HEK293 (cell line): ENCODE measurements at regions of chr12 and their contacts with region 1.

Region 1: DNA sequence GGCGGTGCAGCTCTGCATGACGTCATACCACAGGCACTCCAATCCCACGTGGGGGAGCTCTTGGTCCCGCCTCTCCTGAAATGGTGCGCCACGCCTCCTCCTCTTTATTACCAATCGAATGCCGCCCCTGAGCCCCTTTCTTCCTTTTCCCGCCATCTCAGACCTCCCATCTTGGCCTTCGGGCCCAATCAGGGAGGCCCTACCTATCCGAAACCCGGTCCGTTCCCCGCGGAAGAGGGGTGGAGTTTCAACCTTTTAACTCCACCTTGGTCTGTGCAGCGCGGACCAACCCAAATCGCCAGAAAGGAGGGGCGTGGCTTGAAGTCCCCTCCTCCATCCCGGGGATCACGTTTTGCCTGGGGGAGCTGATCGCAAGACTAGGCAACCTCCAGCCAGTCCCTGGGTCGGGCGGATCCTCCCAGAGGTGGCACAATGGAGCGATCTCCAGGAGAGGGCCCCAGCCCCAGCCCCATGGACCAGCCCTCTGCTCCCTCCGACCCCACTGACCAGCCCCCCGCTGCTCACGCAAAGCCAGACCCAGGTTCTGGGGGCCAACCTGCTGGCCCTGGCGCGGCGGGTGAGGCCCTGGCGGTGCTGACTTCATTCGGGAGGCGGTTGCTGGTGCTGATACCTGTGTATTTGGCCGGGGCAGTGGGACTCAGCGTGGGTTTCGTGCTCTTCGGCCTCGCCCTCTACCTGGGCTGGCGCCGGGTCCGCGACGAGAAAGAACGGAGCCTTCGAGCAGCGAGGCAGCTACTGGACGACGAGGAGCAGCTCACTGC is at the start of gene ESYT1:
- H3K4me3 ChIP-seq: peak within 1 kb of the TSS; percentile 80
- H3K27ac ChIP-seq: peak within 1 kb of the TSS; percentile 57
- H3K4me1 ChIP-seq: peaks cover 9% of the 10 kb centered on the region
- CTCF ChIP-seq: peak; percentile 67; the same call in 1 of the 2 replicates

Region 2: GRCh38 chr12:56143870-56144269 is 15.8 kb after region 1 on chr12:
- CTCF ChIA-PET with region 1: interaction called, 3 read pairs
- POLR2A ChIA-PET with region 1: interaction called, 22 read pairs
- H3K4me3 ChIP-seq: no peak overlapping the region
- H3K27ac ChIP-seq: no peak overlapping the region
- H3K4me1 ChIP-seq: peaks cover 6% of the 10 kb centered on the region; the same call in 1 of the 2 replicates
- CTCF ChIP-seq: no peak

Region 3: DNA sequence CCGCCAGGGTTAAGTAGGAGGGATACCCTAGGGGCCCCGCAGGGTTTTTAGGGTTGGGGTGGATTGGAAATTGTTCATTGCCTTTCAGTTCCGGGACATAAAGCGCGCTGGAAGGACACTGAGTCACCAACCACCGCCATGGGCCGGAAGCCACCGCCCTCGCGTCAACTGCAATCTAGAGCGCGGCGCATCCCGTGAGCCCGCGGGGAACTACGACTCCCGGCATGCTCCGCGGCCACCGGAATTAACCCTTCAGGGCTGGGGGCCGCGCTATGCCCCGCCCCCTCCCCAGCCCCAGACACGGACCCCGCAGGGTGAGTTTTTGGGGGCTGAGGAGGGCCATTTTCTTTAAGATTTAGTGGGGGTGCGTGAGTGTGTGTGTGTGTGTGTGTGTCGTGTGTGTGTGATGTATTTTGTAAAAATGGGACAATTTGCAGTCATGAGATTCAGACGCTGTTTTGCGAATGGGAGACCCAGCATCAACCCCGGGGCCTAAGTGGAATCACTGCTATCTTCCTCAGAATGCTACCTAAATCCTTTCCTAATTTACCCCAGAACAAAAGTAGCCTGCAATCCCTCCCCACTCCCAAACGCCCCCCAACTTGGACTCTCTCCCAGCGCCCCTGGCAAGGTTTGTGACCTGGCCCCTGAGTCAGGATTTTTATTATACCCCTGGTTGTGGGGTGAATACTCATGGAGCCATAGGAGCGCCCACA is 24.4 kb after region 1 on chr12 and contains the start of gene MYL6B:
- CTCF ChIA-PET with region 1: interaction called, 6 read pairs
- POLR2A ChIA-PET with region 1: interaction called, 22 read pairs
- H3K4me3 ChIP-seq: peak within 1 kb of the TSS; percentile 46
- H3K27ac ChIP-seq: peak within 1 kb of the TSS; percentile 74
- H3K4me1 ChIP-seq: no peaks in the 10 kb centered on the region; the same call in 1 of the 2 replicates
- CTCF ChIP-seq: no peak

Region 4: GRCh38 chr12:56158029-56158925 is 30.2 kb after region 1 on chr12 and contains the start of gene MYL6:
- CTCF ChIA-PET with region 1: interaction called, 17 read pairs
- POLR2A ChIA-PET with region 1: interaction called, 42 read pairs
- H3K4me3 ChIP-seq: peak within 1 kb of the TSS; percentile 90
- H3K27ac ChIP-seq: peak within 1 kb of the TSS; percentile 92
- H3K4me1 ChIP-seq: peaks cover 3% of the 10 kb centered on the region; the same call in 1 of the 2 replicates
- CTCF ChIP-seq: peak; percentile 30

Region 5: GRCh38 chr12:56488041-56488955 is 360.2 kb after region 1 on chr12 and contains the start of gene GLS2:
- CTCF ChIA-PET with region 1: no interaction called
- POLR2A ChIA-PET with region 1: no interaction called
- H3K4me3 ChIP-seq: peak within 1 kb of the TSS; percentile 56
- H3K27ac ChIP-seq: peak within 1 kb of the TSS; percentile 60; the same call in 1 of the 2 replicates
- H3K4me1 ChIP-seq: no peaks in the 10 kb centered on the region
- CTCF ChIP-seq: no peak